PC-3 (cell line): ENCODE measurements at regions of chr9 and their contacts with region 1.

Region 1: GRCh38 chr9:35569206-35569605 is 35.9 kb upstream of the TESK1 start:
- DNase-seq: no peak
- ATAC-seq: no peak
- H3K4me3 ChIP-seq: no peak overlapping the region
- H3K27ac ChIP-seq: no peak overlapping the region
- H3K4me1 ChIP-seq: no peaks in the 10 kb centered on the region
- H3K27me3 ChIP-seq: no peaks in the 10 kb centered on the region
- CTCF ChIP-seq: no peak

Region 2: DNA sequence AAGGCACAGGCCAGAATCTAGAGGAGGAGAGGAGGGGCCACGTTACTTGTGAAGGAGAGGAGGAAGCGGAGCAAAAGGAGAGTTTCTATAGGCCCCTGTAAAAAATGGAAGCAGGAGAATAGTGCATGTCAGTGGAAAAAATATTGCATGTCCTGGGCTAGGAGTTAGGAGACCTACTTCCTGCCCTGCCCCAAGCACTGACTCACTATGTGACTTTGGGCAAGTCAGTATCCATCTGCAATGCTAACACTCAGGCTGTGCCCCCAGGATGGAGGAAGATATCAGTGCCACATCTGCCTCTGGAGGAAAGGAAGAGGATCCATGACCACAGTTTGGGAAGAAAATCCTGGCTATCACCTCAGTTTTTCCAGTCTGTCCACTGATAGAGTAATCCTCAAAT is 479.8 kb before region 1 on chr9:
- CTCF ChIA-PET with region 1: no interaction called
- POLR2A ChIA-PET with region 1: no interaction called
- intact Hi-C with region 1: no loop called
- DNase-seq: no peak
- ATAC-seq: peak; percentile 53; the same call in 1 of the 2 replicates
- H3K4me3 ChIP-seq: no peak overlapping the region
- H3K27ac ChIP-seq: no peak overlapping the region
- H3K4me1 ChIP-seq: 0 out of 2 replicates have a peak, but pooled peaks cover 3% of the 10 kb centered on the region
- H3K27me3 ChIP-seq: no peaks in the 10 kb centered on the region
- CTCF ChIP-seq: no peak

Region 3: DNA sequence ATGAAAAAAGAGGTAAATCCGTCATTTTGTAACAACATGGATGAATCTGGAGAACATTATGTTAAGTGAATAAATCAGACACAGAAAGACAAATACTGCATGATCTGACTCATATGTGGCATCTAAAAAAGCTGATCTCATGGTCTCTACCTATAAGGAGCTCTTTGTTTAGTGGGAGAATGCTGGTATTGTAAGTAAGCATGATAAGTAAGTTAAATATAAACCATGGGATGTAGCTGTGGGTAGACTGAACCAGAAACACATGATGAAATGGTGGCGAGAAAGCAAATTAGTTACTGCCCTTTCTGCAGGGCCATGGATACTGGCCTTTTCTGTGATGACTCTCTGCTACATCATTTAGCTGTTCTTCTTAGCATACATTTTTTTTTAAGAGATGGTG is 145.7 kb before region 1 on chr9:
- CTCF ChIA-PET with region 1: no interaction called
- POLR2A ChIA-PET with region 1: no interaction called
- intact Hi-C with region 1: loop called (anchors 10 kb)
- DNase-seq: peak; percentile 63
- ATAC-seq: peak; percentile 82
- H3K4me3 ChIP-seq: no peak overlapping the region
- H3K27ac ChIP-seq: peak overlapping the region; percentile 93
- H3K4me1 ChIP-seq: peaks cover 39% of the 10 kb centered on the region
- H3K27me3 ChIP-seq: no peaks in the 10 kb centered on the region
- CTCF ChIP-seq: no peak